Caco-2 (cell line): ENCODE measurements at regions of chr12 and their contacts with region 1.

Region 1: DNA sequence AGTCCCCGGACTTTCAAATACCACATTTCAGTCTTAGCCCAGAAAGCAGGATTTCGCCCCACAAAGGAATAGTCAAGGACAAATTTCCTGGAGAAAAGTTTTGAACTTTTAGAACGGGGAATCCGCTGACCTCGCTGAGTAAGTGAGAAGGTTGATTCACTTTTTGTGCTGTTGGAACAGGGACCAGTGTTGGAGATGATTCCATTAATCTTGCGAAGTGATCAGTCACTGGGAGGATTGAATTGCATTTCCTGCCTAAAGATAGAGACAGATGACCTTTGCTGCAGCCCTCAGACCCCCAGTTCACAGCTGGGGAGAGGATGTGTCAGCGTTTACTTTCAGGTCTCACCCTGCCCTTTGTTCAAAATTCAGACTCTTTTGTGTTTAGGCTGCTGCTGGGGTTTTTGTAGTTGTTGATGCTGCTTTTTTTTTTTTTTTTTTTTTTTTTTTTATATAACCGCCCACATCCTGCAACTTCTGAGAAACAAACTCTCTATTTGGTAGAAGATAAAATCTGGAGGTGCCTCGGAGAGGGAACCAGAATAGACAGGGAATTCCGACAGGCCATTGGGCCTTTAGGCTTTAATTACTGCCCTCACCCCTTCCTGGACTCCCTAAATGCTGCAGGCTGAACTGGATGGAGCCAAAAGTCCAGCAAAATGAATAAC is 9.8 kb upstream of the KDM2B start:
- DNase-seq: no peak
- H3K4me3 ChIP-seq: no peak overlapping the region
- H3K4me3 Mint-ChIP-seq: no peak overlapping the region
- H3K27ac Mint-ChIP-seq: peak overlapping the region; percentile 75
- H3K4me1 ChIP-seq: peaks cover 17% of the 10 kb centered on the region
- H3K4me1 Mint-ChIP-seq: peaks cover 13% of the 10 kb centered on the region
- H3K27me3 ChIP-seq: no peaks in the 10 kb centered on the region
- H3K27me3 Mint-ChIP-seq: no peaks in the 10 kb centered on the region
- CTCF ChIP-seq: no peak

Region 2: DNA sequence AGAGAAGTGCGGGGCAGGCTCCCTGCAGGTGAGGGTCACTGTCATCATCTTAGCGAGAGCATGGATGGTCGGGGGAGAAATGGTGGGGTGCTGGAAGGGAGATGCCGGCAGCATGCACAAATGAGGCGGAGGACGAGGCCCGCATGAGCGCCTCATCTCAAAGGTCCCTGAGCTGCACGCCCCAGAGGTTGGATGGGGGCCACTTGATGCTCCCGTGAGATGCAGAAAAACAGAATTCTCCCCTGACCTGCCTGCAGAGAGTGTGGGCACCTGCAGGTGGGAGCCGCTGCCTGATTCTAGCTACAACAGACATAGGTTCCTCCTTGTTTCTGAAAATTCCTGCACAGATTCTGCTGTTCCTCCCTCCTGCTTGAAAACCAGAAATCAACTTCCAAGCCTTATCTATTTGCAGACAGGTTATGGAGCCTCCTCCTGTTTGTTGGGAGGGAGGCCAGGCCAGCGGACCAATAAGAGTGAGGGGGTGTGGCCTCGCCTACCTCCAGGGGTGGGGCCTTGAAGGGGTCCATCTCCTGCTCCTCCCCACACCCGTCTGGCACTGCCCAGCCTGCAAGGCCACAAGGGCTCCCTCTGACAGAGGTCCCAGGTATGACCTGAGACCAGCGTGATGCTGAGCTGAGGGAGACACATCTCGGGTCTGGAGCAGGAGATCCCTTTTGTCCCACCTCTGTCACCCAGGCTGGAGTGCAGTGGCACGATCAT is 77.0 kb before region 1 on chr12:
- CTCF ChIA-PET with region 1: no interaction called
- POLR2A ChIA-PET with region 1: no interaction called
- intact Hi-C with region 1: no loop called
- DNase-seq: peak; percentile 82 to 84
- H3K4me3 ChIP-seq: no peak overlapping the region
- H3K4me3 Mint-ChIP-seq: no peak overlapping the region
- H3K27ac Mint-ChIP-seq: no peak overlapping the region
- H3K4me1 ChIP-seq: peaks cover 7% of the 10 kb centered on the region; the same call in 1 of the 2 replicates
- H3K4me1 Mint-ChIP-seq: peaks cover 17% of the 10 kb centered on the region
- H3K27me3 ChIP-seq: no peaks in the 10 kb centered on the region
- H3K27me3 Mint-ChIP-seq: no peaks in the 10 kb centered on the region
- CTCF ChIP-seq: no peak

Region 3: GRCh38 chr12:121600702-121601336 is 10.2 kb after region 1 on chr12:
- CTCF ChIA-PET with region 1: interaction called, 3 read pairs
- POLR2A ChIA-PET with region 1: no interaction called
- intact Hi-C with region 1: loop called (anchors 1 kb)
- DNase-seq: peak; percentile 89 to 97
- H3K4me3 ChIP-seq: no peak overlapping the region
- H3K4me3 Mint-ChIP-seq: peak overlapping the region; percentile 15
- H3K27ac Mint-ChIP-seq: peak overlapping the region; percentile 76
- H3K4me1 ChIP-seq: peaks cover 47% of the 10 kb centered on the region
- H3K4me1 Mint-ChIP-seq: peaks cover 26% of the 10 kb centered on the region
- H3K27me3 ChIP-seq: no peaks in the 10 kb centered on the region
- H3K27me3 Mint-ChIP-seq: no peaks in the 10 kb centered on the region
- CTCF ChIP-seq: no peak